ENCODE measurements at regions of chr10 and their contacts with region 1.

Region 1: DNA sequence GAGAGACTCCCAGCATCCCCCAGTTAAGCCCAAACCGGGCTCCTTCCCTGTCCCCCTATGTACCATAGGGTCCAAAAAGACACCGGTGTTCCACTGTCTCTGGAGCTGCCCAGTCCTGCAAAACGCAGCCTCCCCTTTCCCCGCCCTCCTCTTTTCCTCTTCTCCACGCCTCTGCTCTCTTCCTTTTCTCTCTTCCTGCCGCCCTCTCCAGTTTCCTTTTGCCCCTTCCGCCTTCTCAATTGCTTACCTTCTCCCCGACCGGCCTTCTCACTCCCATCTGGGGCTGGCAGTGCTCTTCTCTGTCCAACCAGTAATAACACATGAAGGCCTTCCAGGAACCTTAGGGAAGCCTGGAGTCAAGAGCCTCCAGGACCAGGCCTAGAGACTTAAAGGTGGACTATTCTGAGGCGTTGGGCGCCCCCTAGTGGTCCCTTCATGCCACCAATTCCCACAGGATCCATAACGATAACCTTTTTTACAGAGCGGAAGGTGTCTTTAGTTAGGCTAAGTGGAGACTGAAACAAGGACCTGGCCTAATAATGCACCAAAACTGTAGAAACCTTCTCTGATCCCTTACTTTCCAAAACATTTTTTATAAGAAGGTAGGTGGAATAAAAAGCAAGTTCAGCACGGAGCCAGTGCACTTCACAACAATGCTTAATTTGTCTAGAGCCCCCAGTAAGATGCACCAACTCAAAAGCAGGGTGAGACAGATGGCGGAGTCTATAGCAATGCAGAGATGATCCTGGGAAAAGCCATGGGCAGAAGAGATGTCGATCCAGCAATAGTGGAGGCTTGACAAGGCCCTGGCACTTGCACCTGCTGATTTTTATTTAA is 27.2 kb upstream of the MSRB2 start:
- DNase-seq: peak in 1 of 2 donors; percentile 93
- H3K4me3 ChIP-seq: no peak overlapping the region
- H3K27ac ChIP-seq: peak overlapping the region; percentile 28 to 33
- H3K4me1 ChIP-seq: peaks cover 5 to 12% of the 10 kb centered on the region in 2 donors
- H3K27me3 ChIP-seq: no peaks in the 10 kb centered on the region
- CTCF ChIP-seq: peak; percentile 44 to 87 (median 86)

Region 2: DNA sequence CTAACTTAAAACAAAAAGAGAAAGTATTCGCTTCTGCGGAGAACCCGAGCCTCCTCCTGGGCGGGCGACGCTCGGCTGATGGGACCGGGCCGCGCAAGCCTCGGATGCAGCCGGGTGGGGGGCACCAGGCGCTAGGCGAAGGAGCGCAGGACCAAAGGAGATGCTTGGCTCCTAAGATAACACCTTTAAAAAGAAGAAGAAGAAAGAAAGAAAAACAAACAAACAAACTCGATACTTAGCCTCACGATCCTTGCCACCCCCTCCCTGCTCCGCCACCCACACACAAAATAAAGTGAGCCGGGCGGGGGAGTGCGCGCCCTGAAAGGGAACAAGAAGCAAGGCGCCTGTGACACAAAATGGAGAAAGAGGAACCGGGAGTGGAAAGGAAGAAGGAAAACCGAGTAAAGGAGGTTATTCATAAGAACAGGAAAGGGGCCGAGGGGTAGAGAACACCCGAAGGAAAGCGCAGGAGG is 816.4 kb before region 1 on chr10:
- intact Hi-C with region 1: loop called (anchors 5 kb)
- DNase-seq: peak in 1 of 2 donors; percentile 81
- H3K4me3 ChIP-seq: peak overlapping the region; percentile 81 to 93
- H3K27ac ChIP-seq: peak overlapping the region; percentile 98
- H3K4me1 ChIP-seq: no peaks in the 10 kb centered on the region
- H3K27me3 ChIP-seq: no peaks in the 10 kb centered on the region
- CTCF ChIP-seq: no peak

Region 3: DNA sequence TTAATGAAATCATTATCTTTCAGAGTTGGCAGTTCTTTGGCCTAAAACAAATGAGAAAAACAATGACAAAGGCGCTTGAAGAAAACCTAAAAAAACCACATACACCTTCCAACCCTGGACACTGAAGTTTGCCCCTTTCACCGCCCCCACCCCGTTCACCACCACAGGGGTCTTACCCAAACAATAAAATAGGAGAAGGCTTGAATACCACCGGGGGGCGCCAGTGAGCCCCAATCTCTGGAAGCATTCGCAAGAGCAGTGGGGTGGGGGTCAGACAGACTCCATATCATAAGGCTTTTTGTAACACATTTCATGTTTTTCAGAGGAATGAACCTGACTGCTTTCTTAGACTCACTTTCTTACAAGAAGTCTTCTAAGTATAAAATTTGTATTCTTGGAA is 517.4 kb before region 1 on chr10:
- intact Hi-C with region 1: loop called (anchors 10 kb)
- DNase-seq: peak in 1 of 2 donors; percentile 67
- H3K4me3 ChIP-seq: no peak overlapping the region
- H3K27ac ChIP-seq: no peak overlapping the region
- H3K4me1 ChIP-seq: no peaks in the 10 kb centered on the region
- H3K27me3 ChIP-seq: no peaks in the 10 kb centered on the region
- CTCF ChIP-seq: peak in 2 of 3 experiments; percentile 46 to 59

Region 4: DNA sequence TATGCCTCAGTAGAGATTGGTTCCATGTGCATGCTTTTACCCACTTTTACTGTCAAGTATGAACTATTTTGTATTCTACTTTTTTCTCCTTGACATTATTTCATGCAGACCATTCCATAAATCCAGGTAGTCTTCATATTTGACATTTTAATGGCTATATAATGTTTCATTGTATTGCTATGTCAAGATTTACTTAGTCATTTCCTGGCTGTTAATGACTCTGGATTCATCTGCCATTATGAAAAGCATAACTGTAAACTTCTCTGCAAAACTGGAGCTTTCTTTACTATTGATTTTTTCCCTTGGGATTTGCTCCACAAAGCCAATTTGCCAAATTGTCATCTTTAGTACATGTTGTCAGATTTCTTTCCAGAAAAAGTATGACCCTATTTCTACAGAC is 20.5 kb after region 1 on chr10:
- intact Hi-C with region 1: no loop called
- DNase-seq: no peak
- H3K4me3 ChIP-seq: no peak overlapping the region
- H3K27ac ChIP-seq: no peak overlapping the region
- H3K4me1 ChIP-seq: no peaks in the 10 kb centered on the region
- H3K27me3 ChIP-seq: no peaks in the 10 kb centered on the region
- CTCF ChIP-seq: no peak

Region 5: GRCh38 chr10:23110722-23111516 is 42.8 kb after region 1 on chr10:
- intact Hi-C with region 1: no loop called
- DNase-seq: no peak
- H3K4me3 ChIP-seq: no peak overlapping the region
- H3K27ac ChIP-seq: no peak overlapping the region
- H3K4me1 ChIP-seq: no peaks in the 10 kb centered on the region
- H3K27me3 ChIP-seq: no peaks in the 10 kb centered on the region
- CTCF ChIP-seq: no peak

Region 6: DNA sequence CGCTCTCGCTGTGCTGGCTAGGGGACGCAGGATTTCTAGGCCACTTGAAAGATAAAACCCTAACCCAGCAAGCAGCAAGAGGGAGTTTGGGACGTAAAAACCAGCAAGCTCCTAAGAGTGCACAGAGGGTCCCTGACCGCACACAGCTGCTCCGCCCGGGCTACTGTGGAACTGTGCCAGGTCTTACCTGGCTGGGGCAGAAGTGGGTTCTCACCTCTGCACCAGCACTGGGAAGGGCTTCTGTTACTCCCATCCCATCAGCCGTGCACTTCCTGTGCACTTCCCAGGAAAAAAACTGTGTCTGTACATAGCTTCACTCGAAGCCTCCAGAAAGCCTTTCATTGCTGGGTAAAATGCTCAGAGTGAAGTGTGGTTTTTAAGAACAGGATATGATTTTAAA is 78.1 kb after region 1 on chr10:
- intact Hi-C with region 1: no loop called
- DNase-seq: no peak
- H3K4me3 ChIP-seq: no peak overlapping the region
- H3K27ac ChIP-seq: no peak overlapping the region
- H3K4me1 ChIP-seq: no peaks in the 10 kb centered on the region
- H3K27me3 ChIP-seq: no peaks in the 10 kb centered on the region
- CTCF ChIP-seq: no peak

Region 7: GRCh38 chr10:23230582-23230981 is 162.4 kb after region 1 on chr10:
- intact Hi-C with region 1: no loop called
- DNase-seq: no peak
- H3K4me3 ChIP-seq: no peak overlapping the region
- H3K27ac ChIP-seq: no peak overlapping the region
- H3K4me1 ChIP-seq: no peaks in the 10 kb centered on the region
- H3K27me3 ChIP-seq: no peaks in the 10 kb centered on the region
- CTCF ChIP-seq: no peak